Testis (tissue), 5 donors: ENCODE measurements at regions of chr12 and their contacts with region 1.

Region 1: GRCh38 chr12:56189176-56189917 is at the start of gene SMARCC2:
- DNase-seq: peak; percentile 91
- H3K4me3 ChIP-seq: peak within 1 kb of the TSS; percentile 80 to 89
- H3K27ac ChIP-seq: peak within 1 kb of the TSS; percentile 92 to 97
- H3K4me1 ChIP-seq: peaks cover 15% of the 10 kb centered on the region
- H3K27me3 ChIP-seq: no peaks in the 10 kb centered on the region
- CTCF ChIP-seq: peak; percentile 64 to 97 (median 68)
- POLR2A ChIP-seq: no peak
- total RNA-seq, gene SMARCC2: 106 to 148 TPM

Region 2: GRCh38 chr12:56117778-56118687 is 71.3 kb before region 1 on chr12 and contains the start of gene ZC3H10:
- intact Hi-C with region 1: loop called (anchors 2 kb)
- DNase-seq: peak; percentile 99
- H3K4me3 ChIP-seq: peak within 1 kb of the TSS; percentile 80 to 90
- H3K27ac ChIP-seq: peak within 1 kb of the TSS; percentile 89 to 95
- H3K4me1 ChIP-seq: peaks cover 19% of the 10 kb centered on the region
- H3K27me3 ChIP-seq: no peaks in the 10 kb centered on the region
- CTCF ChIP-seq: peak; percentile 23 to 67 (median 61)
- POLR2A ChIP-seq: peak; percentile 88
- total RNA-seq, gene ZC3H10: 16.2 to 20.6 TPM

Region 3: GRCh38 chr12:56299853-56300643 is 110.7 kb after region 1 on chr12 and contains the start of gene CS:
- intact Hi-C with region 1: no loop called
- DNase-seq: peak; percentile 100
- H3K4me3 ChIP-seq: peak within 1 kb of the TSS; percentile 78 to 83
- H3K27ac ChIP-seq: peak within 1 kb of the TSS; percentile 67 to 86
- H3K4me1 ChIP-seq: peaks cover 25% of the 10 kb centered on the region
- H3K27me3 ChIP-seq: no peaks in the 10 kb centered on the region
- CTCF ChIP-seq: no peak
- POLR2A ChIP-seq: no peak
- total RNA-seq, gene CS: 67.8 to 70.2 TPM